ENCODE measurements at regions of chr4 and their contacts with region 1.

Region 1: GRCh38 chr4:169810325-169811323 is 52.9 kb upstream of the HPF1 start:
- DNase-seq: peak; percentile 39
- ATAC-seq: peak; percentile 73
- H3K4me3 ChIP-seq: no peak overlapping the region
- H3K27ac ChIP-seq: no peak overlapping the region
- H3K4me1 ChIP-seq: no peaks in the 10 kb centered on the region
- H3K27me3 ChIP-seq: no peaks in the 10 kb centered on the region
- CTCF ChIP-seq: peak; percentile 70; the same call in 1 of the 2 replicates

Region 2: GRCh38 chr4:170027181-170027829 is 216.7 kb after region 1 on chr4:
- CTCF ChIA-PET with region 1: no interaction called
- POLR2A ChIA-PET with region 1: no interaction called
- in situ Hi-C with region 1: loop called (anchors 25 kb)
- intact Hi-C with region 1: no loop called
- DNase-seq: peak; percentile 36
- ATAC-seq: peak; percentile 87
- H3K4me3 ChIP-seq: peak overlapping the region; percentile 78 to 90
- H3K27ac ChIP-seq: peak overlapping the region; percentile 83
- H3K4me1 ChIP-seq: no peaks in the 10 kb centered on the region
- H3K27me3 ChIP-seq: no peaks in the 10 kb centered on the region
- CTCF ChIP-seq: no peak

Region 3: GRCh38 chr4:170047771-170048354 is 237.2 kb after region 1 on chr4:
- CTCF ChIA-PET with region 1: interaction called, 6 read pairs
- POLR2A ChIA-PET with region 1: no interaction called
- in situ Hi-C with region 1: loop called (anchors 25 kb)
- intact Hi-C with region 1: loop called (anchors 5 kb)
- DNase-seq: peak; percentile 41
- ATAC-seq: no peak
- H3K4me3 ChIP-seq: no peak overlapping the region
- H3K27ac ChIP-seq: no peak overlapping the region
- H3K4me1 ChIP-seq: no peaks in the 10 kb centered on the region
- H3K27me3 ChIP-seq: no peaks in the 10 kb centered on the region
- CTCF ChIP-seq: peak; percentile 68; the same call in 1 of the 2 replicates

Measured in Panc1 (cell line).